Dendritic cell treated with granulocyte-macrophage colony-stimulating factor and Interleukin-4, amounts not matched to agents 40 ng/mL and 50 ng/mL, for 4 days (primary cell): ENCODE measurements at regions of chr5 and their contacts with region 1.

Region 1: DNA sequence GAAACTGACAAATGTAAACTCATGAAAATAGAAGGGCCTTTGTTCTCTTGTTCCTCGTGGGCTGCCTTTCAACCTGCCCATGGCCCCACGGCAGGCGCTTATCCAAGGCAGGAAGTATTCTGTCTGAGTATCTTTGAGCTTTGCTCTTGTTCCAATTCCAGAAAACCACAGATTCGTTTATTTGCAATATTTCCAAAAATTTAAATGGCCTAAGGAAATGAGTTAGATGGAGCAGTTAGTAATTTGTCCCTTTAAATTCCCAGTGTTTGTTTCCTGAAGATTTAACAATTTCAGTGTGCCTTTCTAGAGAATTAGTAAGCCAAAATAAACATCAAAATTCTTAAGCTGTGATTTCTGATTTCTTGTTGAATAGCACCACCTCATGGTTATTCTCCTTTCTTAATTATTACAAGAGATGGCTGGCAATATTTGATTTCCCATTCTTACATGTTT is 299.4 kb upstream of the RASA1 start:
- H3K4me3 Mint-ChIP-seq: no peak overlapping the region
- H3K27ac Mint-ChIP-seq: no peak overlapping the region
- H3K4me1 Mint-ChIP-seq: peaks cover 30% of the 10 kb centered on the region
- H3K27me3 Mint-ChIP-seq: peaks cover 2% of the 10 kb centered on the region

Region 2: GRCh38 chr5:86880785-86881492 is 87.4 kb before region 1 on chr5:
- intact Hi-C with region 1: loop called (anchors 2 kb)
- H3K4me3 Mint-ChIP-seq: no peak overlapping the region
- H3K27ac Mint-ChIP-seq: no peak overlapping the region
- H3K4me1 Mint-ChIP-seq: no peaks in the 10 kb centered on the region
- H3K27me3 Mint-ChIP-seq: no peaks in the 10 kb centered on the region

Region 3: DNA sequence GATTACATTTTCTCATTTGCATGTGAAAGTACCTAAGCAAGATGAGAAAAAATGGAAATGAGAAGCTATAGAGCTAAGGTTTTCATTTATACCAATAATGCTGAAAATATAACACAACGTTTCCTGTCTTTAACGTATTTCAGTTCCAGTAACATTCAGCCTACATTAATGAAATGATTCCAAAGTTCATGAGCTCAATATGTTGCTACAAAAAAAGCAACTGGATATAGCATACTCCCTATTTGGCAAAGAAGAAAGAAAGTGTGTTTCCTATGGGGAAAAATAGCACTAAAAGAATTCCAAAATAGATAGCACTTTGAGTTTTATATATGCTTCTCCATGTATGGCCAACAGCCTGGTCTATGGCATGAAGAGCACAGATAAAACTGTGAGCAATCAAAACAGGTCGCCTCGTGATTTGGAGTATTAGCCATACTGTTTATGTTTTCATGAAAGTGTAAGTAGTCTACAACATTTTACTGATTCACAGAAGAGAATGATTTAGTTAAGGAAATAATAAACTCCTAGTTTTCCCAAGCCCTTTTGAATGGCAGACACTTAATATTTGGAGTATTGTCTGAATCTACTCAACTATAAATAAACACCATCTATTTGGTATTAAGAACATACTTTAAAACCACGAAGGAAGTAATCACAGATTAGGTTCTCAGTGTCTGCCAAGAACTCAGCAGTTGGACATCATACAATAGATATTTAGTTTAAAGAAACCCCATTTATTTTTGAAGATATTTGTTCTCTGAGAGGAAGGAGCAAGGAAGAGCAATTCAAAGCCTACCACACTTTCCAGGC is 40.6 kb after region 1 on chr5:
- intact Hi-C with region 1: loop called (anchors 1 kb)
- H3K4me3 Mint-ChIP-seq: no peak overlapping the region
- H3K27ac Mint-ChIP-seq: no peak overlapping the region
- H3K4me1 Mint-ChIP-seq: peaks cover 5% of the 10 kb centered on the region
- H3K27me3 Mint-ChIP-seq: no peaks in the 10 kb centered on the region